PC-9 (cell line): ENCODE measurements at regions of chr13 and their contacts with region 1.

Region 1: GRCh38 chr13:97194479-97194878 is 27.7 kb upstream of the MBNL2 start:
- DNase-seq: peak; percentile 76 to 98
- H3K4me3 ChIP-seq: peak overlapping the region; percentile 27; the same call in 1 of the 2 replicates
- H3K27ac ChIP-seq: peak overlapping the region; percentile 85
- H3K4me1 ChIP-seq: peaks cover 79% of the 10 kb centered on the region
- H3K27me3 ChIP-seq: no peaks in the 10 kb centered on the region
- CTCF ChIP-seq: no peak

Region 2: DNA sequence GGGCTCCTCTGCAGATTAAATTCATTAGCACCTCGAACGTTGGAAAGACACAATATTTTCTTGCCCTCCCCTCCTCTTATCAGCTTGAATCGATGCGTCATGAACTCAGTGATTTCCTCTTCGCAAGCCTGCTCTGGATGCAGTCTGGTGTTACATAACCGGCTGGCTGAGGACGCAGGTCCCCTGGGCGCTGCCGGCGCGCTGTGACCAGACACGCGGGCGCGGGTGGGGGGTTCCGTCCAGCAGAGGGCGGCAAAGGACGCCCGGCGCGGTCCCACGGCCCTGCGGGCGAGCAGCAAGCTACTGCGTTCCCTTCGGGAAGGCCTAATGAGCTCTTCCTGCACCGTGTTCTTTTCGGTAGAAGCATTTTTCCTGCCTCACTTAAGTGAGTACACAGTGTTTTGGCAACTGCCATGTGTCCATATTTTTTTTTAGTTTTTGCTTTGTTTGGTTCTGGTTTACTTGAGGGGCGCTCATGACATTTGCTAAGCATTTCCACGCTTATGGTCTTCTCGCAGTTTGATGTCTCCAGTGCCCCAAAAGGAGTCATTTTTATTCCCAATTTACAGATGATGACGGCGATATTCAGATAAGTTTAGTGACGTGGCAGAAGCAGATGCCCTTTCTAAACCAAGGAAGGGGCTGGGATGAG is 84.5 kb before region 1 on chr13:
- CTCF ChIA-PET with region 1: interaction called, 3 read pairs
- POLR2A ChIA-PET with region 1: interaction called, 7 read pairs
- intact Hi-C with region 1: loop called (anchors 1 kb)
- DNase-seq: peak; percentile 95 to 96
- H3K4me3 ChIP-seq: peak overlapping the region; percentile 21; the same call in 1 of the 2 replicates
- H3K27ac ChIP-seq: peak overlapping the region; percentile 35; the same call in 1 of the 2 replicates
- H3K4me1 ChIP-seq: peaks cover 17% of the 10 kb centered on the region
- H3K27me3 ChIP-seq: no peaks in the 10 kb centered on the region
- CTCF ChIP-seq: peak; percentile 96

Region 3: GRCh38 chr13:97141564-97142005 is 52.9 kb before region 1 on chr13:
- CTCF ChIA-PET with region 1: interaction called, 4 read pairs
- POLR2A ChIA-PET with region 1: interaction called, 4 read pairs
- intact Hi-C with region 1: loop called (anchors 1 kb)
- DNase-seq: peak; percentile 70 to 95
- H3K4me3 ChIP-seq: peak overlapping the region; percentile 62
- H3K27ac ChIP-seq: peak overlapping the region; percentile 79
- H3K4me1 ChIP-seq: peaks cover 51% of the 10 kb centered on the region
- H3K27me3 ChIP-seq: no peaks in the 10 kb centered on the region
- CTCF ChIP-seq: no peak

Region 4: GRCh38 chr13:97205982-97206381 is 11.5 kb after region 1 on chr13:
- CTCF ChIA-PET with region 1: no interaction called
- POLR2A ChIA-PET with region 1: interaction called, 7 read pairs
- intact Hi-C with region 1: loop called (anchors 1 kb)
- DNase-seq: peak in 1 of 2 experiments; percentile 87
- H3K4me3 ChIP-seq: peak overlapping the region; percentile 27; the same call in 1 of the 2 replicates
- H3K27ac ChIP-seq: peak overlapping the region; percentile 86
- H3K4me1 ChIP-seq: peaks cover 32% of the 10 kb centered on the region
- H3K27me3 ChIP-seq: no peaks in the 10 kb centered on the region
- CTCF ChIP-seq: no peak

Region 5: DNA sequence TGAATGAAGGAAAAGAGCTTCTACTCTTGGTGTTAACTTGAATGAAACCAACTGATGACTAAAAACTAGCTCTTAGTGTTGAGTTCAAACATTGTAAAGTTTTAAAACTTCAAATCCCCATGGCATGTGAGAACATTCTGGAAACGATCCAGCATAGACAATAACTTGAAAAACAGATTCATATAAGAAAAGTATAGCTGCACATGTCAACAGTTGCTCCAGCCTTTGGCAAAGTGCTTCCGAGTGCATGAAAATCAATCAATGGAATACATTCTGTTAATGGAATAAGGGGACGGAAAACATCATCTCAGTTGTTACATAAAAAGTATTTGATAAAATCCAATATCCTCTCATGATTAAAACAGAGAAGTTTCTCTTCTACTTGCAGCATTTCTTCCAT is 117.5 kb after region 1 on chr13:
- CTCF ChIA-PET with region 1: no interaction called
- POLR2A ChIA-PET with region 1: interaction called, 13 read pairs
- intact Hi-C with region 1: no loop called
- DNase-seq: no peak
- H3K4me3 ChIP-seq: no peak overlapping the region
- H3K27ac ChIP-seq: no peak overlapping the region
- H3K4me1 ChIP-seq: peaks cover 13% of the 10 kb centered on the region; the same call in 1 of the 2 replicates
- H3K27me3 ChIP-seq: no peaks in the 10 kb centered on the region
- CTCF ChIP-seq: no peak